ENCODE measurements at regions of chr2 and their contacts with region 1.

Region 1: GRCh38 chr2:27703638-27704341 is 40.1 kb downstream of the SLC4A1AP start:
- DNase-seq: peak; percentile 87
- H3K4me3 Mint-ChIP-seq: no peak overlapping the region
- H3K27ac Mint-ChIP-seq: no peak overlapping the region
- H3K4me1 Mint-ChIP-seq: peaks cover 47% of the 10 kb centered on the region
- H3K27me3 Mint-ChIP-seq: no peaks in the 10 kb centered on the region
- CTCF ChIP-seq: peak; percentile 76

Region 2: GRCh38 chr2:27715318-27716210 is 11.8 kb after region 1 on chr2:
- CTCF ChIA-PET with region 1: interaction called, 13 read pairs
- POLR2A ChIA-PET with region 1: interaction called, 44 read pairs
- intact Hi-C with region 1: no loop called
- DNase-seq: no peak
- H3K4me3 Mint-ChIP-seq: no peak overlapping the region
- H3K27ac Mint-ChIP-seq: peak overlapping the region; percentile 85
- H3K4me1 Mint-ChIP-seq: peaks cover 37% of the 10 kb centered on the region
- H3K27me3 Mint-ChIP-seq: no peaks in the 10 kb centered on the region
- CTCF ChIP-seq: no peak

Region 3: DNA sequence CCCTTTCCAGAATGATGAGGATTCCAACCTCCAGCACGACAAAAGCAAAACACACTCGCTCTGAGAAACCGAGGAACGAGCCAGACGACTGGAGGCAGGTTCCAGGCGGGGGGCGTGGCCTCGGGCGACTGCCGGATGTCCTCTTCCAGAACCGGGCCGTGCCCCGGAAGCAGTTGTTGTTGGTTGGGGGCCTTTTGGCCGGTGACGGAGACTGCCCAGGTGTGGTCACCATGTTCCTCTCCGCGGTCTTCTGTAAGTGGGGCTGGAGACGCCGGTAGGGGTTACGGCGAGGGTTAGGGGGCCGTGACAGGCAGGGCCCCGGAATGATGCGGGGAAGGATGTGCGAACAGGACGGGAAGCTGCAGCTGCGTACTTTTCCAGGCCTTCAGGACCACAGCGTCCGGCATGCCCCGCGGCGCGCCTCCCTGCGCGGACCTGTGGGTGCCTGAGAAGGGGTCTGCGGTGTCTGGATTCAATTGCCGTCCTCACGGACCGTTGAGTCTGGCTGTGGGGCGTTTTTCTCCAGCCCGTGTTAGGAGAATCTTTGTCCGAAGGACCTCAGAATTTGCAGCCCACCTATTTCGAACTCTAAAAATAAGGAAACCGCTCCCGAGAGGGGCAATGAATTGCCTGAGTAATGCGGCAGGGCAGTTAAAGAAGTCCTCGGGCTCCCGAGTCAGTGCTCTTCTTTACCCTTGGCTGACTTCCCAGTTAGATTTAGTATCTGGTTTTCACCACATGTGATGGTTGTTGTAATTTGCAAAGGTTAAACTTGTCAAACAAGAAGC is 68.0 kb after region 1 on chr2 and contains the start of gene MRPL33:
- CTCF ChIA-PET with region 1: interaction called, 8 read pairs
- POLR2A ChIA-PET with region 1: interaction called, 23 read pairs
- intact Hi-C with region 1: no loop called
- DNase-seq: peak; percentile 88
- H3K4me3 Mint-ChIP-seq: peak within 1 kb of the TSS; percentile 98
- H3K27ac Mint-ChIP-seq: peak within 1 kb of the TSS; percentile 95
- H3K4me1 Mint-ChIP-seq: peaks cover 40% of the 10 kb centered on the region
- H3K27me3 Mint-ChIP-seq: no peaks in the 10 kb centered on the region
- CTCF ChIP-seq: no peak
- total RNA-seq, gene MRPL33: 204 and 233 TPM in 2 replicates

Region 4: GRCh38 chr2:27815860-27816438 is 112.2 kb after region 1 on chr2:
- CTCF ChIA-PET with region 1: no interaction called
- POLR2A ChIA-PET with region 1: no interaction called
- intact Hi-C with region 1: no loop called
- DNase-seq: no peak
- H3K4me3 Mint-ChIP-seq: no peak overlapping the region
- H3K27ac Mint-ChIP-seq: no peak overlapping the region
- H3K4me1 Mint-ChIP-seq: peaks cover 3% of the 10 kb centered on the region
- H3K27me3 Mint-ChIP-seq: no peaks in the 10 kb centered on the region
- CTCF ChIP-seq: no peak

Region 5: DNA sequence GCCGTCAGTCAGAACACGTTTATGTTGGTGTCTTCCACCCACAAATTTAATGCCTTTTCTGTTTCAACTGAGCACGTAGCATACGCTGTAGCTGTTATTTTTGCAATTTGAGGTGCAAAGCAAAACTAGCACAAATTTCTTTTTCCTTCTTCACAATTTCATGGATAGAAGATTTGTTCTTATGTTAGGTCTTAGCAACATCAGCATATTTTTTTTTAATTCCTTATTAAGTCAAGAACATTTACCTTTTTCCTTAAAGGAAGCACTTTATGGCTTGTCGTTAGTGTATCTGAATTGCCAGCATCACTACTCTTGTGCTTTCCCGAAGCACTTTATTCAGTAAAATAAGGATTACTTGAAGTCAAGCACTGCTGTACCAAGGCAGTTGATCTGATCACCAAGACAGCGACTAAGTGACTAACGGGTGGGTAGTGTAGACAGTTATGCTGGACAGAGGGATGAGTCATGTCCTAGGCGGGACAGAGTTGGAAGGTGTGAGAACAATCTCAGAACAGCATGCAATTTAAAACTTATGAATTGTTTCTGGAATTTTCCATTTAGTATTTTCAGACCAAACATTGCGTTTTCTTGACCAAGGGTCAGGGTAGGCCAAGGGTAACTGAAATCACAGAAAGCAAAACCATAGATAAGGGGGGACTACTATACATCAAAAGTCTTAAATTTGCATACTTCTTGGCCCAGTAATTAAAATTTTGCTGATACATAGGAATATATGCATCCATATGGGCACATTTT is 200.0 kb after region 1 on chr2:
- CTCF ChIA-PET with region 1: no interaction called
- POLR2A ChIA-PET with region 1: no interaction called
- intact Hi-C with region 1: loop called (anchors 5 kb)
- DNase-seq: peak; percentile 73
- H3K4me3 Mint-ChIP-seq: no peak overlapping the region
- H3K27ac Mint-ChIP-seq: peak overlapping the region; percentile 3
- H3K4me1 Mint-ChIP-seq: peaks cover 44% of the 10 kb centered on the region
- H3K27me3 Mint-ChIP-seq: no peaks in the 10 kb centered on the region
- CTCF ChIP-seq: no peak

Region 6: GRCh38 chr2:28276076-28276618 is 572.4 kb after region 1 on chr2:
- CTCF ChIA-PET with region 1: interaction called, 9 read pairs
- POLR2A ChIA-PET with region 1: interaction called, 18 read pairs
- intact Hi-C with region 1: loop called (anchors 10 kb)
- DNase-seq: peak; percentile 94
- H3K4me3 Mint-ChIP-seq: peak overlapping the region; percentile 32
- H3K27ac Mint-ChIP-seq: peak overlapping the region; percentile 88
- H3K4me1 Mint-ChIP-seq: peaks cover 48% of the 10 kb centered on the region
- H3K27me3 Mint-ChIP-seq: no peaks in the 10 kb centered on the region
- CTCF ChIP-seq: no peak

Region 7: DNA sequence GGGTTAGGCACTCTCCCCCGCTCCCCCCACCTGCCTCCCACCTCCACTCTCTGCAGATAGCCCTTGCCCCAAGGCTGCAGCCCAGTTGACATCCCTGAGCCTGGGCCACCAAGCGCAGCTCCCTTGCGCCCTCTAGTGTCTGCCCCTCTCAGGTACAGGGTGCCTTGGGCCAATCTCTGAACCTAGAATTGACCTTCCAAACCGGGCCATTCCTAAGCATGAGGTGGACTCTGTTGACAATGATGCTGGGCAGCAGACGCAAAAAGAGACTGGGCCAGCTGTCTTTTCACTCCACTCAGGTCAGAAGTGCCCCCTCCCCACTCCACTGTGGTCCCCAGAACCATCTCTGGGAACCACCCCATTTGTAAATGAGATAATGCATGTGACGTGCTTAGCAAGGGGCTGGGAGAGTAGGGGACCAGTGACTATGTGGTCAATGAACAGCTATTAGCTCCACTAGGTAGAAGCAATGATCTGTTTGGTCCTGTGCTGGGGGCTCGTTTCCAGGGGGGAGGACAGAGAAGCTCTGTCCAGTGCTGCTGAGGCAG is 748.8 kb after region 1 on chr2:
- CTCF ChIA-PET with region 1: interaction called, 5 read pairs
- POLR2A ChIA-PET with region 1: interaction called, 3 read pairs
- intact Hi-C with region 1: loop called (anchors 1 kb)
- DNase-seq: peak; percentile 68
- H3K4me3 Mint-ChIP-seq: no peak overlapping the region
- H3K27ac Mint-ChIP-seq: no peak overlapping the region
- H3K4me1 Mint-ChIP-seq: peaks cover 31% of the 10 kb centered on the region
- H3K27me3 Mint-ChIP-seq: no peaks in the 10 kb centered on the region
- CTCF ChIP-seq: peak; percentile 94